ENCODE measurements at regions of chr4 and their contacts with region 1.

Region 1: DNA sequence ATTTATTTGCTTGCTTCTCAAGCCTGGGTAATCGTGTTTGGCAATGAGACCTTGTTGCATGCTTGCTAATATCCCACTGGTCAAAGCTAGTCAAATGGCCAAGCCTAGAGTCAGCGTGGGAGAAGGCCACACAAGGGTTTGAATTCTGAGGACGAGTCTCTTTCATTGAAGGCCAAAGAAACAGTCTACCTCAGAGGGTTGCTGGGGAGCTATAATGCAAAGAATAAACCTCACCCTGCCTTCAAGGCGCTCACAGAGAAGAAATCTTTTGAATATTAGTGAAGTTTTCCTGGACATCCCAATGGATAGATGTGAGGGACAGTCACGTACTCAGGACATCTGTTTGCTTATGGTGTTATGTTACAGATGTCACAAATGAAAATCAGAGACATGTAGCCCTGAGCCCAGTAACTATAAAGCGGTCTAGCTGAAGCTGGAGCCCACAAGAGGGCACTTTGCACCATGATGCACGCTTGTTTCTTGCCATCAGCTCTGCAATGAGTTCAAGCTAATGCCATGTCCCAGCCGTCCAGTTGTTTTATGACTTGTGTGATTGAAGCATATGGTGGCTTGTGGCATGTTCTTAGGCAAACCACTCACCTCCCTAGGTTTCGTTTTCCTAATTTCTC is 1.1 kb upstream of the TLR3 start:
- DNase-seq: no peak
- ATAC-seq: peak; percentile 91

Region 2: GRCh38 chr4:185950891-185951290 is 117.0 kb before region 1 on chr4:
- intact Hi-C with region 1: no loop called
- DNase-seq: no peak
- ATAC-seq: no peak

Region 3: GRCh38 chr4:186137196-186137794 is 69.4 kb after region 1 on chr4:
- intact Hi-C with region 1: loop called (anchors 1 kb)
- DNase-seq: no peak
- ATAC-seq: no peak

Region 4: DNA sequence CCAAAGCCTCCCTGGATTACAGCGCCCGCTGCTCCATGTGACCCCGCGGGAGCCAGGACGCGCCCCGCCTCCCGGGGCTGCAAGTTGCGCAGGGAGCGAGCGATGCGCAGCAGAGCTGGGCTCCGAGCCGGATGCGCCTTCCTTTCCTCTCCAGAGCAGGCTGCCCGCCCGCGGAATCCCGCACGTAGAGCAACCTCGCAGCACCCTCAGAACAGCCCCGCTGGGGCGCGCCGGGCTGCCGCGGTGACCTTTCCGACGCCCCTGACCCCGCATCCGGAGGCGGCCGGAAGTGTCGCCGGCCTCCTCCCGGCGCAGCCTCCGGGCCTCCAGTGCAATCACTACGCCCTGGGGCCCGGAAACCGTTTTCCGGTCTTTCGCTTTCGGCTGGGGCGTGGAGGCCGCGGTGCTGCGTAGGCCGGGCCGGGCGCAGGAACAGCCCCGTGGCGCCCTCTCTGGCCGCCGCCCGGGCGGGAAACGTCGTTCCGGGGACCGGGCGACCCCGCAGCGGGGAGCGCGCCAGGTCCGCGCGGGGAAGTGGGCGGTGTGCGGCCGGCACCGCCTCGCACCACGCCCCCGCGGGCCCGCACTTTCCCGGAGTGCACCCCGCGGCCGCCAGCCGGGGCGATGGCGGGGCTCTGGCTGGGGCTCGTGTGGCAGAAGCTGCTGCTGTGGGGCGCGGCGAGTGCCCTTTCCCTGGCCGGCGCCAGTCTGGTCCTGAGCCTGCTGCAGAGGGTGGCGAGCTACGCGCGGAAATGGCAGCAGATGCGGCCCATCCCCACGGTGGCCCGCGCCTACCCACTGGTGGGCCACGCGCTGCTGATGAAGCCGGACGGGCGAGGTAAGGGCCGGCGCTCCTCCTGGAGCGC is 123.6 kb after region 1 on chr4 and contains the start of gene CYP4V2:
- intact Hi-C with region 1: loop called (anchors 1 kb)
- DNase-seq: peak; percentile 91
- ATAC-seq: peak; percentile 92
- total RNA-seq, gene CYP4V2: 22.7 TPM

Measured in Right ventricle myocardium inferior (tissue), 1 donor.